ENCODE measurements at regions of chr16 and their contacts with region 1.

Region 1: GRCh38 chr16:75238132-75238852 is 13.1 kb downstream of the BCAR1 start:
- DNase-seq: no peak
- ATAC-seq: no peak
- H3K4me3 Mint-ChIP-seq: no peak overlapping the region
- H3K27ac Mint-ChIP-seq: no peak overlapping the region
- H3K4me1 Mint-ChIP-seq: peaks cover 2% of the 10 kb centered on the region
- H3K27me3 Mint-ChIP-seq: no peaks in the 10 kb centered on the region

Region 2: DNA sequence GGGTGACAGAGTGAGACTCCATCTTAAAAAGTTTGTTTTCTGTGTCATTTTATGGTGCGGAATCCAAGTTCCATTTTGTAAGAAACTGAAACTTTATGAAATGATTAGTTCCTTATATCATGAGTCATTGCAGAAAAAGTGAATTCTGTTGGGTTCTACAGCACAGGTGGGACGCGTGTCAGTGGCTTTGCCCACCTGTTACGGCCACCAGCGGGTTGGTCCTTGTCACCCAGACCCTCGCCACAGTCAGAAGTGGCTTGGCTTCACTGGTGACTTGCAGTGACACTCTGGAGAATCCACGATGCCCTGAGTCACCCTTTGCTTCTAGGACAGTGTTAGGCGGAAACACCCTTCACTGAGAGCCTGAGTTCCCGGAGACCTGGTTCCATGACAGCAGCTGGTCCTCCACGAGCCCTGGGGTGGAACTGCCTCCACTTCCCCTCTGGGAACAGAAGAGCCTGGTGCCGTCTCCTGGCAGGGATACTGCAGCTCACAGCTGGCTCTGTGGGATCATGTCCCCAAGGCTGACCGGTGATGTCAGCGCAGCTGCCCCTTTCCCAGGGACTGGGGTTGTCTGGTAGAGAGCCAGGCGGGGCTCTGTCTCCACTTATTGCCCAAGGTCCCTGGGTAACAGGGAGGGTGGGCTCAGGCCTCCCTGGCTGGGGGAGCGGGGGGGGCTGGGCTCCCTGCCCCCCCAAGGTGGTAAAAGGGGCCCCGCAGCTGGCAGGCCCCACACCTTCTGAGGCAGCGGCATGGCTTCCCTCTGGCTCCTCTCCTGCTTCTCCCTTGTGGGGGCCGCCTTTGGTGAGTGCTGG is 19.8 kb before region 1 on chr16 and contains the start of gene CTRB1:
- CTCF ChIA-PET with region 1: interaction called, 12 read pairs
- POLR2A ChIA-PET with region 1: no interaction called
- intact Hi-C with region 1: no loop called
- DNase-seq: peak; percentile 46
- ATAC-seq: peak; percentile 45
- H3K4me3 Mint-ChIP-seq: peak within 1 kb of the TSS; percentile 67
- H3K27ac Mint-ChIP-seq: peak within 1 kb of the TSS; percentile 83
- H3K4me1 Mint-ChIP-seq: peaks cover 21% of the 10 kb centered on the region
- H3K27me3 Mint-ChIP-seq: no peaks in the 10 kb centered on the region
- total RNA-seq, gene CTRB1: not detected

Region 3: GRCh38 chr16:75379911-75380847 is 141.9 kb after region 1 on chr16:
- CTCF ChIA-PET with region 1: interaction called, 90 read pairs
- POLR2A ChIA-PET with region 1: no interaction called
- intact Hi-C with region 1: loop called (anchors 1 kb)
- DNase-seq: peak; percentile 49
- ATAC-seq: peak; percentile 53
- H3K4me3 Mint-ChIP-seq: no peak overlapping the region
- H3K27ac Mint-ChIP-seq: no peak overlapping the region
- H3K4me1 Mint-ChIP-seq: peaks cover 49% of the 10 kb centered on the region
- H3K27me3 Mint-ChIP-seq: peaks cover 12% of the 10 kb centered on the region

Region 4: GRCh38 chr16:75402821-75403475 is 164.7 kb after region 1 on chr16:
- CTCF ChIA-PET with region 1: interaction called, 27 read pairs
- POLR2A ChIA-PET with region 1: interaction called, 3 read pairs
- intact Hi-C with region 1: loop called (anchors 1 to 5 kb)
- DNase-seq: no peak
- ATAC-seq: peak; percentile 76
- H3K4me3 Mint-ChIP-seq: no peak overlapping the region
- H3K27ac Mint-ChIP-seq: peak overlapping the region; percentile 19
- H3K4me1 Mint-ChIP-seq: peaks cover 17% of the 10 kb centered on the region
- H3K27me3 Mint-ChIP-seq: no peaks in the 10 kb centered on the region

Region 5: GRCh38 chr16:75764154-75764768 is 526.0 kb after region 1 on chr16:
- CTCF ChIA-PET with region 1: interaction called, 5 read pairs
- POLR2A ChIA-PET with region 1: no interaction called
- intact Hi-C with region 1: loop called (anchors 5 to 10 kb)
- DNase-seq: peak; percentile 70
- ATAC-seq: peak; percentile 93
- H3K4me3 Mint-ChIP-seq: no peak overlapping the region
- H3K27ac Mint-ChIP-seq: no peak overlapping the region
- H3K4me1 Mint-ChIP-seq: peaks cover 11% of the 10 kb centered on the region
- H3K27me3 Mint-ChIP-seq: peaks cover 2% of the 10 kb centered on the region